B cell (primary cell): ENCODE measurements at regions of chr1 and their contacts with region 1.

Region 1: DNA sequence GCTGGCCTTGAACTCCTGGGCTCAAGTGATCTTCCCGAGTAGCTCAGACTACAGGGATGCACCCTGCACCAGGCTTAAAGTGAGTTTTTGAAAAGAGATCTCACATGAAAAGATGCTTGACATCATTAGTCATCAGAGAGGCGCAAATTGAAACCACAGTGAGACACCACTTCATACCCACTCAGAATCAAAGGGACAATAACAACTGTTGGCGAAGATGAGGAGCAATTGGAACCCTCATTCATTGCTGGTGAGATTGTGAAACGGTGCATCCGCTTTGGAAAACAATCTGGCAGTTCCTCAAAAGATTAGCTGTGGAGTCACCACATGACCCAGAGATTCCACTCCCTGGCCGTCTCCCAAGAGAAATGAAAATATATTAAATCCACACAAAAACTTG is 122.3 kb downstream of the PGBD5 start:
- DNase-seq: no peak
- ATAC-seq: no peak
- H3K4me3 ChIP-seq: no peak overlapping the region
- H3K4me3 Mint-ChIP-seq: no peak overlapping the region
- H3K27ac ChIP-seq: no peak overlapping the region
- H3K27ac Mint-ChIP-seq: peak overlapping the region; percentile 29
- H3K4me1 ChIP-seq: peaks cover 35 to 37% of the 10 kb centered on the region in 2 donors
- H3K4me1 Mint-ChIP-seq: peaks cover 65% of the 10 kb centered on the region
- H3K27me3 ChIP-seq: no peaks in the 10 kb centered on the region
- H3K27me3 Mint-ChIP-seq: no peaks in the 10 kb centered on the region
- CTCF ChIP-seq: no peak

Region 2: GRCh38 chr1:229661022-229661877 is 642.6 kb before region 1 on chr1:
- CTCF ChIA-PET with region 1: interaction called, 265 read pairs
- POLR2A ChIA-PET with region 1: no interaction called
- intact Hi-C with region 1: loop called (anchors 1 kb)
- DNase-seq: peak; percentile 82
- ATAC-seq: peak; percentile 92
- H3K4me3 ChIP-seq: no peak overlapping the region
- H3K4me3 Mint-ChIP-seq: no peak overlapping the region
- H3K27ac ChIP-seq: no peak overlapping the region
- H3K27ac Mint-ChIP-seq: peak overlapping the region; percentile 34
- H3K4me1 ChIP-seq: peaks cover 19 to 22% of the 10 kb centered on the region in 2 donors
- H3K4me1 Mint-ChIP-seq: peaks cover 7% of the 10 kb centered on the region
- H3K27me3 ChIP-seq: no peaks in the 10 kb centered on the region
- H3K27me3 Mint-ChIP-seq: no peaks in the 10 kb centered on the region
- CTCF ChIP-seq: peak; percentile 92

Region 3: DNA sequence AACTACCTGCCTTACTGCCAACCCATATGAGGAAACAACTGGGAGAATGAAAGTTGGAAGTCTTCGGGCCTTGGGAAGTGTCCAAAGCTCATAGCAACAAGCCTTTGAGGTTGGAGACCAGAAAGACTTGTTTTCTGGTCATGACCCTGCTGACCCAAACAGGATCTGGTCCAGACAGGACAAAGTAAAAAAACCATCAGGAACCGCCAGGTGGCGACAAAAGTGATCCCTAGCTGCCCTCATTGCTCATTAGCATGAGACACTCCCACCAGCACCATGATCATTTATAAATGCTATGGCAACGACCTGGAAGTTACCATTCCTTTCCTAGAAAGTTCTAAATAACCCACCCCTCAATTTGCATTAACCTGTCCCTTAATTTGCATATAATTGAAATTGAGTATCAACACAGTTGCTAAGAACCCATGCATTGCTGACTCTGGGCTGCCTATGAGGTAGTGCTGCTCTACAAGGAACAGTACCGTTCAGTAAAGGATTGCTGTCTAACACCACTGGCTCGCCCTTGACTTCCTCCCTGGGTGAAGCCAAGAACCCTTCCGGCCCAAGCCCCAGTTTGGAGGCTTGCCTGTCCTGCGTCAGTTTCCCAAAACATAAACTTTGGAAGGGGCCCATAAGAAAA is 588.7 kb before region 1 on chr1:
- CTCF ChIA-PET with region 1: interaction called, 41 read pairs
- POLR2A ChIA-PET with region 1: no interaction called
- intact Hi-C with region 1: no loop called
- DNase-seq: peak; percentile 61
- ATAC-seq: no peak
- H3K4me3 ChIP-seq: no peak overlapping the region
- H3K4me3 Mint-ChIP-seq: no peak overlapping the region
- H3K27ac ChIP-seq: no peak overlapping the region
- H3K27ac Mint-ChIP-seq: peak overlapping the region; percentile 41
- H3K4me1 ChIP-seq: no peaks in the 10 kb centered on the region
- H3K4me1 Mint-ChIP-seq: no peaks in the 10 kb centered on the region
- H3K27me3 ChIP-seq: peaks cover 0 to 3% (median 0%) of the 10 kb centered on the region in 4 experiments
- H3K27me3 Mint-ChIP-seq: peaks cover 4% of the 10 kb centered on the region
- CTCF ChIP-seq: peak; percentile 66

Region 4: GRCh38 chr1:229856009-229856650 is 447.7 kb before region 1 on chr1:
- CTCF ChIA-PET with region 1: no interaction called
- POLR2A ChIA-PET with region 1: no interaction called
- intact Hi-C with region 1: loop called (anchors 5 kb)
- DNase-seq: peak; percentile 82
- ATAC-seq: peak; percentile 99
- H3K4me3 ChIP-seq: peak overlapping the region; percentile 19 to 67 (median 46)
- H3K4me3 Mint-ChIP-seq: peak overlapping the region; percentile 96
- H3K27ac ChIP-seq: peak overlapping the region; percentile 85 to 90
- H3K27ac Mint-ChIP-seq: peak overlapping the region; percentile 97
- H3K4me1 ChIP-seq: peaks cover 34 to 35% of the 10 kb centered on the region in 2 donors
- H3K4me1 Mint-ChIP-seq: peaks cover 29% of the 10 kb centered on the region
- H3K27me3 ChIP-seq: no peaks in the 10 kb centered on the region
- H3K27me3 Mint-ChIP-seq: no peaks in the 10 kb centered on the region
- CTCF ChIP-seq: no peak

Region 5: GRCh38 chr1:230208619-230209261 is 95.1 kb before region 1 on chr1:
- CTCF ChIA-PET with region 1: interaction called, 10 read pairs
- POLR2A ChIA-PET with region 1: no interaction called
- intact Hi-C with region 1: loop called (anchors 5 kb)
- DNase-seq: peak; percentile 59
- ATAC-seq: peak; percentile 53
- H3K4me3 ChIP-seq: no peak overlapping the region
- H3K4me3 Mint-ChIP-seq: peak overlapping the region; percentile 44
- H3K27ac ChIP-seq: peak overlapping the region; percentile 63 to 75
- H3K27ac Mint-ChIP-seq: peak overlapping the region; percentile 96
- H3K4me1 ChIP-seq: peaks cover 58 to 59% of the 10 kb centered on the region in 2 donors
- H3K4me1 Mint-ChIP-seq: peaks cover 70% of the 10 kb centered on the region
- H3K27me3 ChIP-seq: no peaks in the 10 kb centered on the region
- H3K27me3 Mint-ChIP-seq: no peaks in the 10 kb centered on the region
- CTCF ChIP-seq: no peak

Region 6: DNA sequence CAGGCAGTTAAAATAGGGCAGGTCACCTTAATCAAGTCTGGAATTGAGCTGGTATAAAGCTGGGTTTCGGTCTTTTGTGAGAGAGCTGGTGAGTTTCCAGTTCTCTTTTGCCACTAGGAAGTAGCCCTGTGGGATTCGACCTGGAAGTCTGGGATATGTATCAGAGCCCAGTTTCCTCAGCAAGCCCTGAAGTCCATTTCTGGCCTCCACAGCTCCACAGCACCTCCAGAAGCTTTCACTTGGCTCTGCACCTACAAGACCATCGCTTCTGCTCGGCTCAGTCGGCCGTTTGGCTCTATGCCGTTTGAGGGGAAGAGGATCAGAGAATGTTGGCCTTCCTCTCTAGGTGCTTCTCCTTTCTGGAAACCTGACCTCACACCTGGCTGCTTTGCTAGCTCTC is 88.8 kb before region 1 on chr1:
- CTCF ChIA-PET with region 1: interaction called, 4 read pairs
- POLR2A ChIA-PET with region 1: no interaction called
- intact Hi-C with region 1: loop called (anchors 5 kb)
- DNase-seq: peak; percentile 50
- ATAC-seq: no peak
- H3K4me3 ChIP-seq: no peak overlapping the region
- H3K4me3 Mint-ChIP-seq: peak overlapping the region; percentile 44
- H3K27ac ChIP-seq: peak overlapping the region; percentile 21 to 75
- H3K27ac Mint-ChIP-seq: peak overlapping the region; percentile 63
- H3K4me1 ChIP-seq: peaks cover 75 to 77% of the 10 kb centered on the region in 2 donors
- H3K4me1 Mint-ChIP-seq: peaks cover 89% of the 10 kb centered on the region
- H3K27me3 ChIP-seq: no peaks in the 10 kb centered on the region
- H3K27me3 Mint-ChIP-seq: no peaks in the 10 kb centered on the region
- CTCF ChIP-seq: no peak

Region 7: DNA sequence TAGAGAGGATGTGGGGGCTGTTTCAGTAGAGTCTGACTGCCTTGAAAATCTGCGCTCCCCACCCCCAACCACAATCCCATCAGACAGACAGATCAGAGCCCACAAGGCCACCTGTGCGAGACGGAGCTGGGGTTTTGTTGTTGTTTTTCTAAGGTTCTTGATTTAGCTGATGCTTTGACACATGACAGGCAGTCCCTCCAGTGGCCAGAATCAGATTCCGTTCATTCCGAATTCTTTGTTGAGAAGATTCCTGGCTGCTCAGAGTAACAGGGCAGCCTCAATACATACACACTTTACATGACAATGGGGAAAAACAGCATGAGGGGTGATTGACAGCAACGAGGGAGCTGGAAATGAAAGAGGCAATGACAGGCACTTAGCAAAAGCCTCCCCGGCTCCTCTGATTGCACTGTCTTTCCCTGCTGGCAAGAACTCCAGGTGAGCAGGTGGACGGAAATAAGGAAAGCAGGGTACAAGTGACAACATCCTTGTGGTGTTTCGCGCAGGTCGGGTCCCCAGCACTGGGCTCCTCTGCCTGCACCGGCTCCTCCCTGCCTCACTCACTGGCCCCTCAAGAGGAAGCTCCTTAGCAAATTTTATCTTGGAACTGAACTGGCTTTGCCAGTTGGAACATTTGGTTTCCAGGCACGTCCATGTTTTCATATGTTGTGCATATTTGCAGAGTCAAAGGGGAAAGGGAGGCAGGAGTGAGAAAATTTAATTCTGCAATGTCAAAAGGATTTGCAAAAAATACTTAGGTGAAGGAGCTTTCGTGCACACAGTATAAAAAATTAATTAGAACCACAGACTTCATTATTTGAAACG is 26.4 kb before region 1 on chr1:
- CTCF ChIA-PET with region 1: interaction called, 10 read pairs
- POLR2A ChIA-PET with region 1: interaction called, 3 read pairs
- intact Hi-C with region 1: no loop called
- DNase-seq: peak; percentile 61
- ATAC-seq: peak; percentile 50
- H3K4me3 ChIP-seq: peak overlapping the region in 2 of 5 experiments; percentile 2 to 32
- H3K4me3 Mint-ChIP-seq: peak overlapping the region; percentile 56
- H3K27ac ChIP-seq: peak overlapping the region in 1 of 2 donors; percentile 71
- H3K27ac Mint-ChIP-seq: peak overlapping the region; percentile 16
- H3K4me1 ChIP-seq: peaks cover 76 to 86% of the 10 kb centered on the region in 2 donors
- H3K4me1 Mint-ChIP-seq: peaks cover 84% of the 10 kb centered on the region
- H3K27me3 ChIP-seq: no peaks in the 10 kb centered on the region
- H3K27me3 Mint-ChIP-seq: no peaks in the 10 kb centered on the region
- CTCF ChIP-seq: no peak

Region 8: GRCh38 chr1:230350208-230350921 is 46.5 kb after region 1 on chr1:
- CTCF ChIA-PET with region 1: no interaction called
- POLR2A ChIA-PET with region 1: no interaction called
- intact Hi-C with region 1: no loop called
- DNase-seq: no peak
- ATAC-seq: no peak
- H3K4me3 ChIP-seq: no peak overlapping the region
- H3K4me3 Mint-ChIP-seq: no peak overlapping the region
- H3K27ac ChIP-seq: no peak overlapping the region
- H3K27ac Mint-ChIP-seq: no peak overlapping the region
- H3K4me1 ChIP-seq: no peaks in the 10 kb centered on the region
- H3K4me1 Mint-ChIP-seq: no peaks in the 10 kb centered on the region
- H3K27me3 ChIP-seq: no peaks in the 10 kb centered on the region
- H3K27me3 Mint-ChIP-seq: peaks cover 12% of the 10 kb centered on the region
- CTCF ChIP-seq: no peak

Region 9: DNA sequence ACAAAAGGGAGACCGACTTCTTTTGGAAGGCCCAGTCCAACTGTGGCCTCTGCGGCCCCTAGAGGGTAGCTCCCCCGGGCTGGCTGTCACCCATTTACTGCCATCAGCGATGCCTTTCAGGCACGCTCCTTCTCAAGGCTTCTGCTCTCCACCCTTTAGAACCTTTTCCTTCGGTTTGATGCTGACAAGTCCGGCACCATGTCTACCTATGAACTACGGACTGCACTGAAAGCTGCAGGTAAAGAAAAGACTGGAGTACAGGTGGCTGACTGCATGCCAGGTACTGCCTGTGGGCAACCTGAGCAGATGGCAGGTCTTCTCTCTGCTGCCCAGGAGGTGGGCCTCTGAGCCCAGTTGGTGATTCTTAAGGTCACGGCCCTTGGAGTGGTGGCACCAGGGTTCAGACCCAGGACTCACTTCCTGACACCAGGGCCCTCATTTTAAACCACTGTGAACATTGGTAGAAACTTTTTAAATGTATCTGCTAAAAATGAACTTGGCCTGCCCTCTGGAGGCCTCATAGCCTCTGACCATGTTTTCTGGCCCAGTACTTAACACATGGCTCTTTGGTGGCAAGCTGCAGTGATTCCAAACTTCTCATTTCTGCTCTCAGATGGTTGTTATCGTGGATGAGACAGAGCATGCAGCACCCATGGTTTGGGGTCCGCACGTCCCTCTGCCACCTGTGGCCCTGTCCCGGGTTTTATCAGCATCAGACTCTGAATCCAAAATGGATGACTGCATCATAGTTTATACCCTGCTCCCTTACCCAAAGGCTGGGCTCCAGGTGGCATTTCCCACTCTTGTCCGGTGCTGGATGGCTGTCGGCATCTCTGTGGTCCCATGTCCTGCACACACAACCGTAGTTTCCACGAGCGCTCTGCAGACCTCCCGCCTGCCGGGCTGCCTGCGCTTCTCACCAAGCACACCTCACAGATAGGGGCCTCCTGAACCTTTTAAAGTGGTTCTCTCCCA is 489.2 kb after region 1 on chr1:
- CTCF ChIA-PET with region 1: no interaction called
- POLR2A ChIA-PET with region 1: no interaction called
- intact Hi-C with region 1: no loop called
- DNase-seq: no peak
- ATAC-seq: no peak
- H3K4me3 ChIP-seq: no peak overlapping the region
- H3K4me3 Mint-ChIP-seq: no peak overlapping the region
- H3K27ac ChIP-seq: no peak overlapping the region
- H3K27ac Mint-ChIP-seq: no peak overlapping the region
- H3K4me1 ChIP-seq: no peaks in the 10 kb centered on the region
- H3K4me1 Mint-ChIP-seq: no peaks in the 10 kb centered on the region
- H3K27me3 ChIP-seq: peaks cover 0 to 11% (median 0%) of the 10 kb centered on the region in 4 experiments
- H3K27me3 Mint-ChIP-seq: peaks cover 29% of the 10 kb centered on the region
- CTCF ChIP-seq: no peak